ENCODE measurements at regions of chr22 and their contacts with region 1.

Region 1: DNA sequence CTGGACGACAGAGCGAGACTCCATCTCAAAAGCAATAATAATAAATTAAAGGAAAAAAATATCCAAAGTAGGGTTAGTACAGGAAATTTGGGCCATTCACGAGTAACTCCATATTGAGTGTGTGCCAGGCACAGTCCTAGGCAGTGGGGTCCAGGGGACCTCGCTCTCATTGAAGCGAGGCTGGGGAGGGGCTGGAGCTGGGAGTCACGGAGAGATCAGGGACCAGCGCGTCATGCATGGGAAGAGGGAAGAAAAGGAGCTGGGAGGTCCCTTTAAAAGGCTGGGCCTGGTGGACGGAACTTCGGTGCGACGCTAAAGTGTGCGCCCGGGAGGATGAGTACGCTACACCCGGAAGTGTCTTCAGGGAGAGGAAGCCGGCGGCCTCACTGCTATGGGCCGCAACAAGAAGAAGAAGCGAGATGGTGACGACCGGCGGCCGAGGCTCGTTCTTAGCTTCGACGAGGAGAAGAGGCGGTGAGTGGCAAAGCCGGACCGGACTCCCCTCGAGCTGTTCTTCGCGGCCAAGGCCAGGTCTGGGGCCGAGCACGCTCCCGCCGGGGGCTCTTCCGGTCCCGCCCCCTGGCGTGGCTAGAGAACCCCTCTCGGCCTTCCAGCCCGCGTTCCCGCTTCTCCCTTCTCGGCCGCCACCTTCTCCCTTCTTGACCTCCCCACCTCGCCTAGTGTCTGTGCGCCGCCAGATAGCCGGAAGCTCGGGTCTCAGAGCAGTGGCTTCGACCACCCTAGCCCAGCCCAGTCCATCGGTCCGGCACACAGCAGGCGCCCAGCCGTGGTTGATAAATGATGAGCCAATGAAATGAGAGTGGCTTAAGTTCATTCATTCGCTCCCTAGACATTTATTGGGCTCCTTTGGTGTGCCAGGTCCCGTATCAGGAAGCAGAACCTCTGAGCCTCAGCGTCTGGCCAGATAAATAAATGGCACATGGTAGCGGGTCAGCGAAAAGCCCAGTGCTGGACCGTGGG is at the start of gene NOL12:
- DNase-seq: peak; percentile 83 to 86
- H3K4me3 ChIP-seq: peak within 1 kb of the TSS; percentile 94
- H3K27ac ChIP-seq: peak within 1 kb of the TSS; percentile 59
- H3K4me1 ChIP-seq: peaks cover 47% of the 10 kb centered on the region
- H3K27me3 ChIP-seq: no peaks in the 10 kb centered on the region
- CTCF ChIP-seq: 0 out of 2 replicates have a peak, but pooled peaks have one; percentile 26
- total RNA-seq, gene NOL12: 42.1 and 44.3 TPM in 2 replicates

Region 2: GRCh38 chr22:37186228-37186996 is 499.9 kb before region 1 on chr22:
- CTCF ChIA-PET with region 1: no interaction called
- POLR2A ChIA-PET with region 1: no interaction called
- intact Hi-C with region 1: no loop called
- DNase-seq: peak; percentile 71 to 80
- H3K4me3 ChIP-seq: peak overlapping the region; percentile 65
- H3K27ac ChIP-seq: peak overlapping the region; percentile 94
- H3K4me1 ChIP-seq: peaks cover 52% of the 10 kb centered on the region
- H3K27me3 ChIP-seq: no peaks in the 10 kb centered on the region
- CTCF ChIP-seq: no peak

Region 3: DNA sequence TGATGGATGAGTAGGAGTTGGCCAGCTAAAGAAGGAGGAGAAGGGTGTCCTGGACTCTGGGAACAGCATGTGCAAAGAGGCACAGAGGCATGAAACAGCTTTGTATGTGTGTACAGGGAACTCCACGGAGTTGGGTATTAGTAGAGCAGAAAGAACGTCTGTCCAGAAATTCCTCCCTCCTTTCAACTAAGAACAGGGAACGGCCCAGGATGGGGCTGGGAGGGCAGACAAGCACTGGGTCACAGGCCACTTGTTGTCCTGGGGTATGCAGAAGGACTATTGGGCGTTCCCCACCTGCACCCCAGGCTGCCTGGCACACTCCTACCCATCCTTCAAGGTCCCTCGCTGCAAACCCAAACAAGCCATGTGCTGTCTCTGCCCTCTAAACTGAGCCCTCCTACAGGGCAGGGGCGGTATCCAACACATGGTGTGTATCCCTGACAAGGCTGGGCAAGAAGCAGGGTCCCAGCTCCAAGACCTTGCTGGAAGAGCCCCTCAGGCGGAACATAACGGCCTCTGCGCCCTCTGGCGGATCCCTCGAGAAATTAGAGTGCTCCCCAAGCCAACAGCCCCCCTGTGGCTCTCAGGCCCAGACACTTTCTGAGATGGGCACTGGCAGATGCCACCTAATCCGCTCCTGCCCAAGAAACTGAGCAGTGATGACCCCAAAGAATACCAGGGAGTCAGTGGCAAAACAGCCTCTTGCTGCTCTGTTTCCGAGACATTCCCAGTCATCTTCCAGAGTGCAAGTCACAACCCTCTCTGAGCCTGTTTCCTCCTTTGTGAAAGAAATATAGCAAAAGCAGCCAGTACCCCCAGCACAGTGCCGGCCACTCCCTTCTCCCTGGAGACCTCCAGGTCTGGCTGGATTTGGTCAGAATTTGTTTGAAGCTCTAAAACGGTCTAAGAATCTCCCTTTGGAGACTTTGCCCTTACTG is 257.4 kb before region 1 on chr22:
- CTCF ChIA-PET with region 1: interaction called, 11 read pairs
- POLR2A ChIA-PET with region 1: no interaction called
- intact Hi-C with region 1: no loop called
- DNase-seq: no peak
- H3K4me3 ChIP-seq: no peak overlapping the region
- H3K27ac ChIP-seq: no peak overlapping the region
- H3K4me1 ChIP-seq: peaks cover 50% of the 10 kb centered on the region
- H3K27me3 ChIP-seq: no peaks in the 10 kb centered on the region
- CTCF ChIP-seq: peak; percentile 82

Region 4: DNA sequence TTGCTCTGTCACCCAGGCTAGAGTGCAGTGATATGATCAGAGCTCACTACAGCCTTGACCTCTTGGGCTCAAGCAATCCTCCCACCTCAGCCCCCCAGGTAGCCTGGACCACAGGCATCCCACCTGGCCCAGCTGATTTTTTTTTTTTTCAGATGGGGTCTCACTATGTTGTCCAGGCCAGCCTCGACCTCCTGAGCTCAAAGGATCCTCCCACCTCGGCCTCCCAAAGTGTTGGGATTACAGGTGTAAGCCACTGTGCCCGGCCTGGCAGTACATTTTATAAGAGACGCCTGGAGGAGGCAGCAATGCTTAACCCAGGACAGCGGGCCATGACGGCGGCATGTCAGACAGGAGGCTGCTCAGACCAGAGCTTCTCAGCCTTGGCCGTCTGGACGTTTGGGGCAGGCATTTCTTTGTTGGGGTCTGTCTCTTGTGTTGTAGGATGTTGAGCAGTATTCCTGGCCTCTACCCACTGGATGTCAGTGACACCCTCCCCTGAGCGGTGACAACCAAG is 110.7 kb before region 1 on chr22:
- CTCF ChIA-PET with region 1: interaction called, 18 read pairs
- POLR2A ChIA-PET with region 1: no interaction called
- intact Hi-C with region 1: no loop called
- DNase-seq: no peak
- H3K4me3 ChIP-seq: no peak overlapping the region
- H3K27ac ChIP-seq: no peak overlapping the region
- H3K4me1 ChIP-seq: peaks cover 15% of the 10 kb centered on the region
- H3K27me3 ChIP-seq: no peaks in the 10 kb centered on the region
- CTCF ChIP-seq: no peak

Region 5: DNA sequence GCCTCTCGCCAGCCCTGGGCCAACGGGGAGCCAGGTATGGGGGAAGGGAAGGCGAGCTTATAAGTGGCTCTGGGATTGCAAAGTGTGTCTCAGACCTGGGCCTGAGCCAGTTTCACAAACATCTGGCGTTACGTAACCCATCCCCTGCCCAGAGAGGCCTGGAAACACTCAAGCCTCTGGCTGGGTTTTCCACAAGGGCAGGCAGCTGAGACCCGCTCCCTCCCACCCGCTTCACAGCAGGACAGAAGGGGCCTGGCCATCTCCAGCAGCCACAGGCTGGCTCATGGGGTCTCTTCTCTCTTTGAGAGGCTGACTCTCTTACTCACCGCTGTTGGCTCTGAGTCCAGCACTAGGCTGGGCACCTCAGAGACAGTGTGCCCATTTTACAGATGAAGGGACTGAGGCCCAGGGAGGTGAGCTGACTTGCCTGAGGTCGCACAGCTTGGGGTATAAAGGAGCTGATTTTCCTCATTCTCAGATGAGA is 55.1 kb after region 1 on chr22:
- CTCF ChIA-PET with region 1: no interaction called
- POLR2A ChIA-PET with region 1: no interaction called
- intact Hi-C with region 1: loop called (anchors 2 kb)
- DNase-seq: no peak
- H3K4me3 ChIP-seq: no peak overlapping the region
- H3K27ac ChIP-seq: peak overlapping the region; percentile 57
- H3K4me1 ChIP-seq: peaks cover 43% of the 10 kb centered on the region
- H3K27me3 ChIP-seq: no peaks in the 10 kb centered on the region
- CTCF ChIP-seq: no peak

Region 6: GRCh38 chr22:37784829-37785493 is 98.7 kb after region 1 on chr22:
- CTCF ChIA-PET with region 1: interaction called, 13 read pairs
- POLR2A ChIA-PET with region 1: no interaction called
- intact Hi-C with region 1: no loop called
- DNase-seq: peak; percentile 88 to 97
- H3K4me3 ChIP-seq: no peak overlapping the region
- H3K27ac ChIP-seq: peak overlapping the region; percentile 74
- H3K4me1 ChIP-seq: peaks cover 49% of the 10 kb centered on the region
- H3K27me3 ChIP-seq: no peaks in the 10 kb centered on the region
- CTCF ChIP-seq: no peak

Region 7: DNA sequence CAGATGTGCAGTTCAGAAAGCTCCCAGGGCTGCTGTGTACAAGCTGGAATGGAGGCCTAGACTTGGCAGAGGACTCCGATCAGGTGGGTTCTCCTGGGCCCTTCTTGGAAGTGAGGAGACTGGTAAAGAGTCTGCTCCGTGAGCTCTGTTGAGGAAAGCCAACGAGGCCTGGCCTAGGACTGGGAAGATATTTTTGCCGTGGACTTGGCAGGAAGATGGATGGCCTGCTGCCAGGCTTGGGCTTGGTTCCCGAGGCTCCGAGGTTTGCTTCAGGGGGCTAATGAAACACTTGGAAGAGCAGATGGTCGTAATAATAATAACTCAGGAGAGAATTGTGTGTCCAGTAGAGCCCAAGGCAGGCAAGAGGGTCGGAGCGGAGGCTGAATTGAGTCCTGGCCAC is 140.8 kb after region 1 on chr22:
- CTCF ChIA-PET with region 1: no interaction called
- POLR2A ChIA-PET with region 1: no interaction called
- intact Hi-C with region 1: no loop called
- DNase-seq: no peak
- H3K4me3 ChIP-seq: no peak overlapping the region
- H3K27ac ChIP-seq: no peak overlapping the region
- H3K4me1 ChIP-seq: no peaks in the 10 kb centered on the region
- H3K27me3 ChIP-seq: no peaks in the 10 kb centered on the region
- CTCF ChIP-seq: no peak

Region 8: DNA sequence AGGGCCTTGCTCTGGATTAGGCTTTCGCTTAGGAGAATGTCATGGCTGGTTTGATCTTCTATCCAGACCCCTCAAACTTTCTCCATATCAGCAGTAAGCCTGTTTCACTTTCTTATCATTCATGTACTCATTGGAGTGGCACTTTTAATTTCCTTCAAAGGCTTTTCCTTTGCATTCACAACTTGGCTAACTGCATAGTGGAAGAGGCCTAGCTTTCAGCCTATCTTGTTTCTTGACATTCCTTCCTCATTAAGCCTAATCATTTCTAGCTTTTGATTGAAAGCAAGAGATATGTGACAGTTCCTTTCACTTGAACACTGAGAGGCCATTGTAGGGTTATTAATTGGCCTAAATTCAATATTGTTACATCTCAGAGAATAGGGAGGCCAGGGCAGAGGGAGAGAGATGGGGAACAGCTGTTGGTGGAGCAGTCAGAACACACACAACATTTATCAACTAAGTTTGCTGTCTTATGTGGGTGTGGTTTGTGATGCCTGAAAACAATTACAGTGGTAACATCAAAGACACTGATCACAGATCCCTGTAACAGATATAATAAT is 1233.4 kb after region 1 on chr22:
- CTCF ChIA-PET with region 1: no interaction called
- POLR2A ChIA-PET with region 1: no interaction called
- intact Hi-C with region 1: no loop called
- DNase-seq: no peak
- H3K4me3 ChIP-seq: no peak overlapping the region
- H3K27ac ChIP-seq: no peak overlapping the region
- H3K4me1 ChIP-seq: peaks cover 42% of the 10 kb centered on the region
- H3K27me3 ChIP-seq: peaks cover 14% of the 10 kb centered on the region; the same call in 1 of the 2 replicates
- CTCF ChIP-seq: no peak